Body of pancreas (tissue), 4 donors: ENCODE measurements at regions of chr1 and their contacts with region 1.

Region 1: GRCh38 chr1:64823691-64824476 is 79.0 kb downstream of the RAVER2 start:
- DNase-seq: peak; percentile 72 to 86 (median 80)
- ATAC-seq: peak; percentile 85
- H3K4me3 ChIP-seq: no peak overlapping the region
- H3K27ac ChIP-seq: no peak overlapping the region
- H3K4me1 ChIP-seq: no peaks in the 10 kb centered on the region
- H3K27me3 ChIP-seq: no peaks in the 10 kb centered on the region
- CTCF ChIP-seq: peak; percentile 49 to 92 (median 92)
- POLR2A ChIP-seq: no peak

Region 2: GRCh38 chr1:64343105-64343887 is 480.6 kb before region 1 on chr1:
- intact Hi-C with region 1: no loop called
- DNase-seq: no peak
- ATAC-seq: no peak
- H3K4me3 ChIP-seq: no peak overlapping the region
- H3K27ac ChIP-seq: no peak overlapping the region
- H3K4me1 ChIP-seq: no peaks in the 10 kb centered on the region
- H3K27me3 ChIP-seq: no peaks in the 10 kb centered on the region
- CTCF ChIP-seq: no peak
- POLR2A ChIP-seq: no peak

Region 3: DNA sequence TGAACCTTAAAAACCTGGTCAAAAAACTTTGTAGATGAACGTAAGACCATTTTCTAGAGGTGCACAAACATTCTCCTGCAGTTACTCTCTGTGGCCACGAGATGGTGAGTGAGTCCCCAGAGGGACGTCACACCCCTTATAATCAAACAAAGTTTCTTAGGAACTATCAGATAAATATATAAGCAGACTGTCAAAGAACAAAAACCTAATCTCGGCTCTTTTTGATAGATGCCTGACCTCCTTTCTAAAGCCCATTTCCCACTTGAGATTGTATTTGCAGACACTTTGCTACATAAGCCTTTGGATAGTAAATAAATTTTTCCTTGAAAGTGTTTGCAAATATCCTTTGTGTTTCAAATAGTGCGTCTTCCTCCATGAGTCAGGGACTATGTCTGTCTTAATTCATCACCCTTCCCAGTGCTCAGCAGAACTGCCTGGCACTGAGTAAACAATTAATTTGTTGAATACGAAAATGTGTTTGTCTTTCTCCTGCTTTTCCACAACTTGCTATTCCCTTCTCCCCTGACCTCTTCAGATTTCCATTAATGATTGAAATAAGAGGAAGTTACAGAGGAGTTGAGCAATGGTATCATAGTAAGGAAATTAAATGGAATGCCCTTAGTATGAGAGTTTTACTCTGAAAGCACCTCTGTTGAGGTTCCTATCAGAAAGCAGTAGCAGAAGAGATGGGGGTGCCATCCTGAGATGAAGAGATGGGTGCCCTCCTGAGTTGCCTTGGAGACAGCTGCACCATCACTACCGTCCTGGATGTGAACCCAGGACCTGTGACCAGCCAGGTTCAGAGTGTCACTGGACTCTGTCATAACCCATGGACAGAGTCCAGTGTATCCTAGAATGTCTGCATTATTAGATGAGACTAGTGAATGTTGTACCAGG is 136.8 kb before region 1 on chr1:
- intact Hi-C with region 1: loop called (anchors 10 kb)
- DNase-seq: peak; percentile 43 to 54 (median 48)
- ATAC-seq: peak; percentile 89
- H3K4me3 ChIP-seq: no peak overlapping the region
- H3K27ac ChIP-seq: peak overlapping the region in 2 of 4 donors; percentile 15 to 38
- H3K4me1 ChIP-seq: no peaks in the 10 kb centered on the region
- H3K27me3 ChIP-seq: no peaks in the 10 kb centered on the region
- CTCF ChIP-seq: peak; percentile 73 to 89 (median 84)
- POLR2A ChIP-seq: no peak